Activated CD4-positive, alpha-beta memory T cell treated with anti-CD3 and anti-CD28 coated beads, Interleukin-2, amount 10 ng/mL, durations not matched to agents 7 days and 5 days (primary cell): ENCODE measurements at regions of chr7 and their contacts with region 1.

Region 1: GRCh38 chr7:150994141-150994964 is 3.5 kb downstream of the NOS3 start:
- DNase-seq: peak; percentile 54
- H3K4me3 Mint-ChIP-seq: no peak overlapping the region
- H3K27ac Mint-ChIP-seq: peak overlapping the region; percentile 61
- H3K4me1 Mint-ChIP-seq: peaks cover 43% of the 10 kb centered on the region
- H3K27me3 Mint-ChIP-seq: peaks cover 10% of the 10 kb centered on the region

Region 2: DNA sequence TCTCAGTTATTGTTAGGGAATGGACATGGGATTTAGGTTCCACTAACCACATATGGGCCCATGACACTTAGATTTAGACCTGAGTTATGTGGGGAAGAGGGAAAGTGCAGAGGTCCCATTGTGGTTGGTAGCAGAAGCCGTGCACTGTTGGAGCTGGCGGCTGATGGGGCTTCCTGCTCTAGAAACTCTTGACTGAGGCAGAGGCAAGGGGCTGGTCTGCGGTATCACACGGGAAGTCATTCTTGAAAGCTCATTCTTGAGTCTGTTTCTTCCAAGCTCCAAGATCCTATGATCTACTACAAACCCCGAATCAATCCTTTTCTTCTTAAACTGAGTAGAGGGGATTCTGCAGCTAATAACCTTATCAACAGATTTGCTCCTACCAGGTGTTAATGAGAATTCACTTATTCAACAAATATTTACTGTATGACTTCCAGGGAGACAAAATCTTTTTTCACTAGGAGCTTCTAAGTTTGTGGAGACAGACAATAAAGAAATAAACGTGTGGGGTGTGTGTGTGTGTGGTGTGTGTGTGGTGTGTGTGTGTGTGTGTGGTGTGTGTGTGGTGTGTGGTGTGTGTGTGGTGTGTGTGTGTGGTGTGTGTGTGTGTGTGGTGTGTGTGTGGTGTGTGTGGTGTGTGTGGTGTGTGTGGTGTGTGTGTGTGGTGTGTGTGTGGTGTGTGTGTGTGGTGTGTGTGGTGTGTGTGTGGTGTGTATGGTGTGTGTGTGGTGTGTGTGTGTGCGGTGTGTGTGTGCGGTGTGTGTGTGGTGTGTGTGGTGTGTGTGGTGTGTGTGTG is 85.0 kb before region 1 on chr7:
- CTCF ChIA-PET with region 1: no interaction called
- POLR2A ChIA-PET with region 1: no interaction called
- DNase-seq: peak; percentile 70
- H3K4me3 Mint-ChIP-seq: peak overlapping the region; percentile 4
- H3K27ac Mint-ChIP-seq: peak overlapping the region; percentile 29
- H3K4me1 Mint-ChIP-seq: peaks cover 8% of the 10 kb centered on the region
- H3K27me3 Mint-ChIP-seq: peaks cover 37% of the 10 kb centered on the region

Region 3: DNA sequence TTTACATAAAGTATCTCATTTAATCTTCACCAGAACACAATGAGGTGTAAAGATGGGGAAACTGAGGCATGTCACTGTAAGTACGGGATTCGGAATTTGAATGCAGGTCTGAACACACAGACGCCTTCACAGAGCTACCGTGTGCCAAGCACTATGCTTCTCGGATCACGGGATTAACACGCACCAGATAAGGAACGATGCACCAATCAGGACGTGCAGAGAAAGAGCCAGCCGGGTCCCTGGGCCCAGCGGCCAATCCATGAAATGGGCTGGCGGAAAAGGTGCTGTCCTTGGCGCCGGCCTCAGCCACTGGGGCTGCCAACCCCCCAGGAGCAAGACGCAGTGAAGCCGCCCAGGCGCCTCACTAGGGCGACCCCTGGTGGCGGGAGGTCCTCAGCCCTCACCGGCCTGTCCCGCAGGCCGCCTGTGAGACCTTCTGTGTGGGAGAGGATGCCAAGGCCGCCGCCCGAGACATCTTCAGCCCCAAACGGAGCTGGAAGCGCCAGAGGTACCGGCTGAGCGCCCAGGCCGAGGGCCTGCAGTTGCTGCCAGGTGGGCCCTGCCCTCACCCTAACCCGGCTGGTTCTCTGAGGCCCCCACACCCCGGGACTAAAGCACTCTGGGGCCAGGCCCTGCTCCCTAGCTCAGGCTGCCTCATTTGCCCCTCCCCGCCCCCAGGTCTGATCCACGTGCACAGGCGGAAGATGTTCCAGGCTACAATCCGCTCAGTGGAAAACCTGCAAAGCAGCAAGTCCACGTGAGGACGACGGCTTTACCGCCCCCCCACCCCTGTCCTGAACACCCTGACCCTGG is 14.4 kb after region 1 on chr7:
- CTCF ChIA-PET with region 1: interaction called, 16 read pairs
- POLR2A ChIA-PET with region 1: interaction called, 31 read pairs
- DNase-seq: peak; percentile 79
- H3K4me3 Mint-ChIP-seq: peak overlapping the region; percentile 76
- H3K27ac Mint-ChIP-seq: peak overlapping the region; percentile 92
- H3K4me1 Mint-ChIP-seq: peaks cover 67% of the 10 kb centered on the region
- H3K27me3 Mint-ChIP-seq: peaks cover 2% of the 10 kb centered on the region

Region 4: GRCh38 chr7:151017953-151018420 is 23.6 kb after region 1 on chr7:
- CTCF ChIA-PET with region 1: interaction called, 20 read pairs
- POLR2A ChIA-PET with region 1: interaction called, 5 read pairs
- DNase-seq: peak; percentile 82
- H3K4me3 Mint-ChIP-seq: peak overlapping the region; percentile 66
- H3K27ac Mint-ChIP-seq: no peak overlapping the region
- H3K4me1 Mint-ChIP-seq: peaks cover 61% of the 10 kb centered on the region
- H3K27me3 Mint-ChIP-seq: peaks cover 32% of the 10 kb centered on the region

Region 5: GRCh38 chr7:151261529-151261928 is 267.2 kb after region 1 on chr7:
- CTCF ChIA-PET with region 1: no interaction called
- POLR2A ChIA-PET with region 1: no interaction called
- DNase-seq: no peak
- H3K4me3 Mint-ChIP-seq: no peak overlapping the region
- H3K27ac Mint-ChIP-seq: no peak overlapping the region
- H3K4me1 Mint-ChIP-seq: no peaks in the 10 kb centered on the region
- H3K27me3 Mint-ChIP-seq: peaks cover 17% of the 10 kb centered on the region